Endothelial cell of umbilical vein (primary cell): ENCODE measurements at regions of chr12 and their contacts with region 1.

Region 1: GRCh38 chr12:119780786-119781434 is 96.2 kb downstream of the CIT start:
- DNase-seq: peak; percentile 67
- H3K4me3 ChIP-seq: no peak overlapping the region
- H3K27ac ChIP-seq: no peak overlapping the region
- H3K4me1 ChIP-seq: no peaks in the 10 kb centered on the region
- H3K27me3 ChIP-seq: no peaks in the 10 kb centered on the region
- CTCF ChIP-seq: peak; percentile 69 to 79
- POLR2A ChIP-seq: no peak

Region 2: DNA sequence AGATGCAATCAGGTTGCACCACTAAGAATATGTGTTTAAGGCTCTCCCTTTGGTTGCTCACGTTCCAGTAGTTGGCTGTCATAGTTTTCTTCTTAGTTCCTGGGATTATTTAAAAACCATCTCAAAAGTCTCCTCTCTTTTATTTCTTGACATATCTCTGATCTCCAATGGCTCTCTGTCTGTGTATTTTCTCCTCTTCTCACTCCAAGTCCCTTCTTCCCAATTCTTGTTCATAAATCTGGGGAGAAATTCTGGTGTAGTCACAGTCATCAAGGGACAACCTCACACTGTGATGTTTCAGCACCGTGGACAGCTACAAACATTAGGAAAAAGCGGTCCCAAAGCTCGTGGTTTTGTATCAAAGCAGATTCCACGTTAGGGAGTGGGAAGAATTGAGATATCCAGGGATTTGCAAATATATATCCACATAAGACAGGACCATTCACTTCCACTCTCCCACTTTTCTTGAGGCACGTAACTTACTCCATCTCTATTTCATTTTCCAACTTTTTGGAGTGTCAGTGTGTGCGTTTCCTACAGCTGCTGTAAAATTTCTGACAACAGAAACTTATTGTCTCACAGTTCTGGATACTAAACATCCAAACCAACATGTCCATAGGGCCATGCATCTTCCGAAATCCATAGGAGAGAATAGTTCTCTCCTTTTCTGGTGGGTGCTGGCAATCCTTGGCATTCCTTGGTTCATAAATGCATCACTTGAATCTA is 268.0 kb before region 1 on chr12:
- CTCF ChIA-PET with region 1: no interaction called
- POLR2A ChIA-PET with region 1: no interaction called
- dilution Hi-C with region 1: no loop called
- intact Hi-C with region 1: no loop called
- DNase-seq: no peak
- H3K4me3 ChIP-seq: no peak overlapping the region
- H3K27ac ChIP-seq: no peak overlapping the region
- H3K4me1 ChIP-seq: no peaks in the 10 kb centered on the region
- H3K27me3 ChIP-seq: no peaks in the 10 kb centered on the region
- CTCF ChIP-seq: no peak
- POLR2A ChIP-seq: no peak

Region 3: DNA sequence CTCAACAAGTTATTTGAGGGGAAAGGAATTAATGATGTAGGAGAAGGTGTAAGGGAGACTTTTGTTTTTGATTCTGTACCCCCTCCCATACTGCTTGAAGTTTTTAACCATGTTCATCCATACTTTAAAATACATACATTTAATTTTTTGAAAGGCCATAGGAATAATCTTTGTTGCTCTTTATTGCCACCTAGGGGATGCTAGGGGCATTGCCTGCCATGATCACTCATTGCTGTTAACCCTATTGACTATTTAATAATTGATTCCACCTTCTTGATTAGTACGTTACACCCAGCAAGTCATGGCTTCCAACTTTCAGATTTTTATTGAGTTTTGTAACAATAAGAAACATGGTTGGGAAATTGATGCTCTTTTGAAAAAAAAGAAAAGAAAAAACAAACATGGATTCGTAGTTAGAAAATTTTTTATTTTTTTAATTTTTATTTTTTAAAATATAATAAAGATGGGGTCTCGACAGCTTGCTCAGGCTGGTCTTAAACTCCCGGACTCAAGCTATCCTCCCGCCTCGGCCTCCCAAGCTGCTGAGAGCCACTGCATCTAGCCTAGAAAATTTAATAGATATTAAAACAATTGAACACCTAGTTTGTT is 121.5 kb before region 1 on chr12:
- CTCF ChIA-PET with region 1: interaction called, 50 read pairs
- POLR2A ChIA-PET with region 1: no interaction called
- dilution Hi-C with region 1: no loop called
- intact Hi-C with region 1: loop called (anchors 2 kb)
- DNase-seq: peak; percentile 42
- H3K4me3 ChIP-seq: no peak overlapping the region
- H3K27ac ChIP-seq: no peak overlapping the region
- H3K4me1 ChIP-seq: no peaks in the 10 kb centered on the region
- H3K27me3 ChIP-seq: peaks cover 3 to 6% of the 10 kb centered on the region in 2 experiments
- CTCF ChIP-seq: peak; percentile 62 to 70
- POLR2A ChIP-seq: no peak

Region 4: DNA sequence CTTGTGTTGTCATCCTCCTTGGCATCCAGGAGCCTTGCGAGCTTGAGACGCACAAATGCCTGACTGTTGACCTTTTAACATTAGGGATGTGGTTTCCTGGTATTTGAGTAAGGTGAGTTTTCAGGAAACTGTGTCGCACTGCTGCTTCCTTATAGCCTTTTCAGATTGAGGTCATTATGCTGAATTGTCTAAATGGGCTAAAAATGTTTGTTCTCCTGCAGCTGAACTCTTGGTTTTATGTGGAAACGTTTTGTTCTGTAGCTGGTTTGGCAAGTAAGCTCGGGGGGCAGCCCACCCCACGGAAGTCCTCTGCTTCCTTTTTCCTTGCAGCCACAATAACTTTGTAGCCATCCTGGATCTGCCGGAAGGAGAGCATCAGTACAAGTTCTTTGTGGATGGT is 107.3 kb before region 1 on chr12:
- CTCF ChIA-PET with region 1: interaction called, 40 read pairs
- POLR2A ChIA-PET with region 1: no interaction called
- dilution Hi-C with region 1: no loop called
- intact Hi-C with region 1: no loop called
- DNase-seq: peak; percentile 85
- H3K4me3 ChIP-seq: no peak overlapping the region
- H3K27ac ChIP-seq: peak overlapping the region; percentile 63
- H3K4me1 ChIP-seq: peaks cover 28% of the 10 kb centered on the region
- H3K27me3 ChIP-seq: no peaks in the 10 kb centered on the region
- CTCF ChIP-seq: no peak
- POLR2A ChIP-seq: peak; percentile 75

Region 5: DNA sequence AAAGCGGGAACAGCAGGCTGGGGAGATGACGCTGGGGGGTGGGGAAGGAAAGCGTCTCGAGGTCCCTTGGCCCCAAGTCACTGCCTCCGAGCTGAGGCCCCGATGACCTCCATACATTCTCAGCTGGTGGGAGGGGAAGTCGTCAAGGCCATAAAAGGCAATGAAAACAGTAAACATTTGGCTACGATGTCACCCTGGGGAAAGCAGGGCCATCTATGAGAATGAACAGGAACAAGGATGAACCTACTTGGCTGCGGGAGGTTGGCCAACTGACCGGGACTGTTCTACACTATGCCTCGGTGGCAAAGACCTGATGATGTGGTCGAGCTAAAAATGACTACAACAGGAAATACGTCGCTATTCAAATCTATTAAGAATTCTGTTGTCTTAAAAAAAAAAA is 93.5 kb before region 1 on chr12:
- CTCF ChIA-PET with region 1: interaction called, 10 read pairs
- POLR2A ChIA-PET with region 1: no interaction called
- dilution Hi-C with region 1: no loop called
- intact Hi-C with region 1: no loop called
- DNase-seq: no peak
- H3K4me3 ChIP-seq: no peak overlapping the region
- H3K27ac ChIP-seq: no peak overlapping the region
- H3K4me1 ChIP-seq: peaks cover 10% of the 10 kb centered on the region
- H3K27me3 ChIP-seq: no peaks in the 10 kb centered on the region
- CTCF ChIP-seq: no peak
- POLR2A ChIP-seq: no peak

Region 6: GRCh38 chr12:119710352-119710964 is 70.5 kb before region 1 on chr12:
- CTCF ChIA-PET with region 1: interaction called, 14 read pairs
- POLR2A ChIA-PET with region 1: no interaction called
- dilution Hi-C with region 1: no loop called
- intact Hi-C with region 1: no loop called
- DNase-seq: no peak
- H3K4me3 ChIP-seq: no peak overlapping the region
- H3K27ac ChIP-seq: no peak overlapping the region
- H3K4me1 ChIP-seq: peaks cover 4% of the 10 kb centered on the region
- H3K27me3 ChIP-seq: no peaks in the 10 kb centered on the region
- CTCF ChIP-seq: no peak
- POLR2A ChIP-seq: no peak

Region 7: DNA sequence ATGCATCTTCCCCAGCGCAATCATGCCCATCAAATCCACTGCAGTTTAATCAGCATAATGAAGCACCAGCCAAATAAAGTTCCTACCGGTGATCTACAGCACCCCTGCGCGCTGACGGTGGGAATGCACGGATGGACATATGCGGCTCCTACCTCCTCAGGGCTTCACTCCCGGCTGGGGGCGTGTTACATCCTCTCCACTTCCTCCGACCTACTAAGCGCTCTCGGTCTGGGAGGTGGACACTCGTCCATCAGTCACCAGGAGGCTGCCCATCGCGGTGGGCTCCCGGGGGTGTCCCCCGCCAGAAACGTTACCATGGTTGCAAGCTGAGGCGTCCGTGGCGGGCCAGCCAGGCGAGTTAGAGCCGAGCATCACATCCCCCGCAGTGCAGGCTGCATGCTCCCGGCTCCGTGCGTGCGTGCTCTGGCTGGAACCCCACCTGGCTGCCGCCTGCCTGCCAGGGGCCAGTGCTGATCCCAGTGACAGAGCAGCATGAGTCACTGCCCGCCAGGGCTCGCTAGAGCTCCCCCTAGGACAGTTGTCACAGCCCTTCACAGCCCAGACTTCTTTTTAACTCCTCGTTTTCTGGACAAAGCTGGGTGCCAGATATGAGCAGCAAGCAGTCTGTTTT is 23.2 kb after region 1 on chr12:
- CTCF ChIA-PET with region 1: interaction called, 35 read pairs
- POLR2A ChIA-PET with region 1: no interaction called
- dilution Hi-C with region 1: no loop called
- intact Hi-C with region 1: no loop called
- DNase-seq: peak; percentile 71
- H3K4me3 ChIP-seq: no peak overlapping the region
- H3K27ac ChIP-seq: no peak overlapping the region
- H3K4me1 ChIP-seq: no peaks in the 10 kb centered on the region
- H3K27me3 ChIP-seq: no peaks in the 10 kb centered on the region
- CTCF ChIP-seq: peak; percentile 47 to 65
- POLR2A ChIP-seq: no peak